Activated CD4-positive, alpha-beta T cell treated with anti-CD3 and anti-CD28 coated beads for 36 hours (primary cell): ENCODE measurements at regions of chr14 and their contacts with region 1.

Region 1: DNA sequence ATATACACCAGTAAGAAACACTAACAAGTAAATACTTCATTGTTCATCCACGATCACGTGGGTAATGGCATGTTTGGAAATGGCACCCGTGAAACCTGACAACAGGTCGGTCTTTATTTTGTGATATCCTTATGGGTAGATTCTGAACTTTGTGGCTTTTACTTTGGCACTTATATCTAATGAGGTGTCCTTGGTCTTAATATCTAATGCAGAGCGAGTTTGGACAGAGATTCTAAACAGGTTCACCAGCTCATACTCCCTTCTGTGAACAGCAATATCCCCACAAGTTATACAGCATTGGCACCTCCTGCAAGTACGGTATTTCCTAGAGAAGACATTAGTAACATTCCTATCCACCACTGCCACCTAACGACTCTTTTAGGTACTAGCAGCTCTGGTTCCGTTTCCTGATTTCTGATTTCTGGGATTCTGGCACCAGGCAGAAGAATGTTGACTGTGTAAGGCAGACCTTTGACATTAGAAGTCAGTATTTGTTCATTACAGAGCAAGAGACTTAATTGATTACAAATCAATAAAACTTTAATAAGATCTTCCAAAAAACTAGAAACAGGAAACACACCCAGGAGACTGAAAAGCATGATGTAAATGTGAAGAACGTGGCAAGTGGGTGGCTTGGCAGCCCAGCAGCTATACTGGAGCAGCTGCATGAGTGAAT is 2.4 kb downstream of the ANG start:
- DNase-seq: peak; percentile 49
- ATAC-seq: peak; percentile 83
- H3K4me3 Mint-ChIP-seq: no peak overlapping the region
- H3K27ac Mint-ChIP-seq: peak overlapping the region; percentile 19
- H3K4me1 Mint-ChIP-seq: peaks cover 12% of the 10 kb centered on the region
- H3K27me3 Mint-ChIP-seq: no peaks in the 10 kb centered on the region

Region 2: DNA sequence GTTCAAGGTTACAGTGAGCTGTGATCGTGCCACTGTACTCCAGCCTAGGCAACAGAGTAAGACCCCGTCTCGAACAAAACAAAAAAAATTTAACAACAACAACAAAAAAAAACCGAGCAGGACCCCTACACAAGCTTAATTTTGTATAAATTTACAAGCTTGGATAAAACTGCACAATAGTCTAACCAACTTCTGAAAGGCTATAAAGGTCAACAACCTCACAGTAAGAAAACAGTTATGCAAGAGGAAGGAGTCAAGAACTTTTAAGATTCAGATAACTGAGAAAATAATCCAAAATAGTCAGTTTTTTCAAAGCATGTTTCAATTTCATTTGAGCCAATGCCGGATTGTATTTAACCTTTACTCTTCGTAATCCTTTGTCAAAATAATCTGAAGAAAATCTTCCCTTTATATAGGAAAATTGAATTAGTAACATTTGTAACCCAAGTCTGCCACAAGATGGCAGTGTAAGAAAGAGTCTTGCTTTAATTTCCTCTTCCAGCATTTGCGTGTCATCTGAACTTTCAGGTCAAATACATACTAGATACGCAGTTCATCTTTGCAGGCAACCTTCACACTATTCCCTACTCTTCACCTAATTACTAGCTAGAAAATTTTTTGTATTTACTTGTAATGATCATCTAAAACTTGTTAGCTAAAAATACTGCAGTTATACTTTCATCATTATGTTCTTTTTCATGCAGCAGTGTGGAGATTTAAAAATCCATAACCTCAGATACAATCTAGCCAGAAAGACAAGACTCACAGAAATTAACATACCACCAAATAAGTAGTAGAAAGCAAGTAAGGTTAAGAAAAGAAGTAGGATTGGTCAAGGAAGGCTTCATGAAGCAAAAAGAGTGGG is 363.7 kb before region 1 on chr14:
- CTCF ChIA-PET with region 1: interaction called, 11 read pairs
- POLR2A ChIA-PET with region 1: no interaction called
- intact Hi-C with region 1: no loop called
- DNase-seq: no peak
- ATAC-seq: peak; percentile 71
- H3K4me3 Mint-ChIP-seq: no peak overlapping the region
- H3K27ac Mint-ChIP-seq: peak overlapping the region; percentile 44
- H3K4me1 Mint-ChIP-seq: peaks cover 37% of the 10 kb centered on the region
- H3K27me3 Mint-ChIP-seq: no peaks in the 10 kb centered on the region

Region 3: GRCh38 chr14:20530771-20531571 is 160.0 kb before region 1 on chr14:
- CTCF ChIA-PET with region 1: interaction called, 3 read pairs
- POLR2A ChIA-PET with region 1: no interaction called
- intact Hi-C with region 1: loop called (anchors 1 kb)
- DNase-seq: peak; percentile 87
- ATAC-seq: peak; percentile 89
- H3K4me3 Mint-ChIP-seq: peak overlapping the region; percentile 32
- H3K27ac Mint-ChIP-seq: no peak overlapping the region
- H3K4me1 Mint-ChIP-seq: peaks cover 7% of the 10 kb centered on the region
- H3K27me3 Mint-ChIP-seq: peaks cover 9% of the 10 kb centered on the region

Region 4: GRCh38 chr14:20632682-20633428 is 58.1 kb before region 1 on chr14:
- CTCF ChIA-PET with region 1: interaction called, 17 read pairs
- POLR2A ChIA-PET with region 1: no interaction called
- intact Hi-C with region 1: loop called (anchors 1 to 2 kb)
- DNase-seq: peak; percentile 88
- ATAC-seq: peak; percentile 85
- H3K4me3 Mint-ChIP-seq: peak overlapping the region; percentile 75
- H3K27ac Mint-ChIP-seq: peak overlapping the region; percentile 43
- H3K4me1 Mint-ChIP-seq: peaks cover 45% of the 10 kb centered on the region
- H3K27me3 Mint-ChIP-seq: peaks cover 10% of the 10 kb centered on the region

Region 5: DNA sequence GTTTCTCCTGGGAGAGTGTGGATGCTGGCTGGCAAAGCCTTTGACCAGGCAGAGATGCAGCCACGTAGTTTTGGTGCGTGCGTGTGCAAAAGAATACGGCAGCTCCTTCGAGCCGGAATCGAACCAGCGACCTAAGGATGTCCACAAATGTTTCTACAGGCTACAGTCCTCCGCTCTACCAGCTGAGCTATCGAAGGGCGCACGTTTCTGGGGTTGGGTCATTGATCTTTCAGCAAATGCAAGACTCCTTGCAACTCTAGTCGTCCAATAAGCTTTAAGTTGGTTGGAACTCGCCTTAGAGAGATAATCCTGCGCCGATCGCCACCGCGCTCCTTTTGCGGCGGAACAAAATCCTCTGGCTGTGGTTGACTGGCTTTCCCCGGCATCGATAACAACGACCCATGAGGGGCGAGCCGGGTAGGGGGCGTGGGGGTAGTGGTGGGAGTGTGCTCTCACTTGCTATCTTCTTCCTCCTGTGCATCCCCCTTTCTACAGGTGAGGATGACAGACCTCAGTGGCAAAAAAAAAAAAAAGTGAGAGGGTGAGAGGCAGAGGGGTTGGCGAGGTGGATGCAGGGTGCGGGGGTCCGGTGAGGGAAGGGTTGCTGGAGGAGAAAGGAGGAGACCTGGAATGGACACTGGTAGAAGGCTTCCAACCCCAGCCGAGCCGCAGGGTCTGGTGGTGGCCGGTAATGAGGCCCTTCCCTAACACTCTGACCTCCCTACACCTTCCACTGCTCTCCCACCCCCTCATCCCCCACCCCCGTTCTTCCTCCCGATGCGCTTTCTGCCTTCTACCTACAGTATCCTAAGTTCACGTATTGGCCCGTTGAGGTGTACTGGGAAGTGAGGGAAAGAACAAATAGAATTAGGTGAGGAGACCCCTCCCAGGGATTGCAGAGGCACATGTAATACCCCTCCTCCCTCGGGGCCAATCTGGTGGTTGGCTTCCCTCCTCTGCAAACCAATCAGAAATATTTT is 37.7 kb before region 1 on chr14:
- CTCF ChIA-PET with region 1: interaction called, 31 read pairs
- POLR2A ChIA-PET with region 1: interaction called, 3 read pairs
- intact Hi-C with region 1: loop called in 1 of 2 experiments (anchors 5 kb)
- DNase-seq: peak; percentile 86
- ATAC-seq: peak; percentile 88
- H3K4me3 Mint-ChIP-seq: peak overlapping the region; percentile 66
- H3K27ac Mint-ChIP-seq: no peak overlapping the region
- H3K4me1 Mint-ChIP-seq: peaks cover 16% of the 10 kb centered on the region
- H3K27me3 Mint-ChIP-seq: peaks cover 56% of the 10 kb centered on the region

Region 6: GRCh38 chr14:20662968-20663732 is 27.8 kb before region 1 on chr14:
- CTCF ChIA-PET with region 1: interaction called, 43 read pairs
- POLR2A ChIA-PET with region 1: no interaction called
- intact Hi-C with region 1: loop called (anchors 1 kb)
- DNase-seq: peak; percentile 93
- ATAC-seq: peak; percentile 88
- H3K4me3 Mint-ChIP-seq: peak overlapping the region; percentile 72
- H3K27ac Mint-ChIP-seq: peak overlapping the region; percentile 40
- H3K4me1 Mint-ChIP-seq: peaks cover 22% of the 10 kb centered on the region
- H3K27me3 Mint-ChIP-seq: peaks cover 2% of the 10 kb centered on the region